Transverse colon (tissue), 4 donors: ENCODE measurements at regions of chr15 and their contacts with region 1.

Region 1: DNA sequence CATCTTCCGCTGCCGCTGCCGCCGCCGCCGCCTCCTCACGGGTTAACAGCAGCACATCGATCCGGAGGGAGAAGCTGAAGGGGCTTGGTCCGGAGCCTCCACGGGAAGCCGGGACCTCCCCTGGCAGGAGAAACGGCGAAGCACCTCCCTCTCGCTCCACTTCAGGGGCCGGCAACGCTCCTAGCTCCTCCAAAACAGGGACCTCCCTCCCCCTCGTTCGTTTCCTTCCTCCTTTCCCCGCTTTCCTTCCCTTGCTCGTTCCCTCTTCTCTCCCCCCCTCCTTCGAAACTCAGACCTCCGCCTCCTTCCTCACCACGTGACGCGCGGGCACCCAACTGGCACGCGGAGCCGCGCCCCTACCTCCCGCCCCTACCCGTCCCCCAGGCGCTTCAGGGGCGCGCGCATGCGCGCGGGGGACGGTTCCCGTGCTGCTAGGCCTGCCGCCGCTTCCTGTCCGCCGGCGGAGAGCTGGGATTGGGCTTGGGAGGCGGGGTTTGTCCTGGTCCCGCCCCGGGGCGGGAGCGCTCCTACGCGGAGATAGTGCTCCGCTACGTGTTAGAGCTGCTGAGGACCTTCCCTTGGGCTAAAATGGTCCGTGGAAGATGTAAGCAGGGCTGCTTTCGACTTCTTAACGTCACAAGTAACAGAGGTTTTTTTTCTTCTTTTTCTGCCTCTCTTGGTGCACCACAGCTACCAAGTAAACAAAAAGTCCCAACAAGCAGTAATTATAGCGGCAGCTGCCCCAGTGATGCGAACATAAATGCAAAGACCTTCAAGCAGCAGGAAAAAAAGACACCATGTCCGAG is at the start of gene ADAM10:
- DNase-seq: peak; percentile 99
- H3K4me3 ChIP-seq: peak within 1 kb of the TSS; percentile 85 to 99 (median 95)
- H3K27ac ChIP-seq: peak within 1 kb of the TSS; percentile 97 to 99 (median 99)
- H3K4me1 ChIP-seq: peaks cover 17 to 37% (median 26%) of the 10 kb centered on the region in 4 donors
- H3K27me3 ChIP-seq: no peaks in the 10 kb centered on the region
- CTCF ChIP-seq: no peak
- EP300 ChIP-seq: no peak
- POLR2A ChIP-seq: peak; percentile 93
- total RNA-seq, gene ADAM10: 45.3 to 941 (median 69.1) TPM

Region 2: GRCh38 chr15:58269455-58270414 is 480.0 kb before region 1 on chr15:
- in situ Hi-C with region 1: loop called in 2 of 4 experiments (anchors 10 to 25 kb)
- intact Hi-C with region 1: no loop called
- DNase-seq: peak; percentile 24
- H3K4me3 ChIP-seq: no peak overlapping the region
- H3K27ac ChIP-seq: peak overlapping the region in 3 of 4 donors; percentile 27 to 57 (median 41)
- H3K4me1 ChIP-seq: no peaks in the 10 kb centered on the region
- H3K27me3 ChIP-seq: no peaks in the 10 kb centered on the region
- CTCF ChIP-seq: peak; percentile 45 to 81 (median 62)
- EP300 ChIP-seq: no peak
- POLR2A ChIP-seq: no peak

Region 3: GRCh38 chr15:58632789-58633188 is 116.9 kb before region 1 on chr15:
- in situ Hi-C with region 1: no loop called
- intact Hi-C with region 1: no loop called
- DNase-seq: no peak
- H3K4me3 ChIP-seq: no peak overlapping the region
- H3K27ac ChIP-seq: no peak overlapping the region
- H3K4me1 ChIP-seq: peaks cover 6 to 17% (median 7%) of the 10 kb centered on the region in 4 donors
- H3K27me3 ChIP-seq: no peaks in the 10 kb centered on the region
- CTCF ChIP-seq: no peak
- EP300 ChIP-seq: no peak
- POLR2A ChIP-seq: no peak